ENCODE measurements at regions of chr19 and their contacts with region 1.

Region 1: DNA sequence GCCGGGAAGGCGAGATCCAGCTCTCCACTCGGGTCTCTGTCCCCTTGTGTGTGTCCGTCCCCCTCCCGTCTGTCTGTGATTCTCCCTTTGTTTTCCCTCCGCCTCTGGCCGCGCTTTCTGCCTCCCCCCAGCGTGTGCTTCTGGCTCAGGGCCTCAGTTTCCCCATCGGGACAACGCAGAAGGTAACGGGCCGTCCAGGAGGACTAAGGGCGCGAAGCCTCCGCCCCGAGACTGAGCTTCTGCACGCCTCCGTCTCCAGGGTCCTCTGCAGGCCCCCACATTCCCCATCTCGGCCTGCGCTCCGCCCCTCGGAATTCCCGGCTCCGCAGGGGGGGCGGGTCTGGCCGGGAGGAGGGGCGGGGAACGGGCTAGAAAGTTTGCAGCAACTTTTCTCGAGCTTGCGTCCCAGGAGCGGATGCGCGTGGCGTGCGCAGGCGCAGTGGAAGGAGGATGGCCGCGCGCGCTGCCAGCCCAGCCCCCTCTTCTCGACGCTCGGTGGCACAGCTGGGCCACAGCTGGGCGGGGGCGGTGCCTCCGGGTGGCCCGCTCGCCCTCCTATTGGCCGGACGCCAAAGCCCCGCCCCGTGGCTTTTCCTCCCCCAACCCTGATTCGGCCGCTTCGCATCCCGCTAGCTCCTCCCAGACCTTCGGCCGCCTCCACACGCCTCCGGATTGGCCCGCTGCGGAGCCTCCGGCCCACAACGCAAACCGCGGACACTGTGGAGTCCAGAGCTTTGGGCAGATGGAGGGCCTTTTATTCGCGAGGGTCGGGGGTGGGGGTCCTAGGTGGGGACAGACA is at the start of gene SIX5:
- DNase-seq: peak; percentile 99
- H3K4me3 ChIP-seq: peak within 1 kb of the TSS; percentile 87 to 98 (median 92)
- H3K27ac ChIP-seq: peak within 1 kb of the TSS; percentile 91 to 98 (median 97)
- H3K4me1 ChIP-seq: peaks cover 42 to 75% (median 65%) of the 10 kb centered on the region in 4 donors
- H3K27me3 ChIP-seq: no peaks in the 10 kb centered on the region
- CTCF ChIP-seq: peak in 1 of 3 experiments; percentile 6
- EP300 ChIP-seq: no peak
- POLR2A ChIP-seq: peak; percentile 84
- total RNA-seq, gene SIX5: 18.2 to 39.9 (median 28.8) TPM

Region 2: DNA sequence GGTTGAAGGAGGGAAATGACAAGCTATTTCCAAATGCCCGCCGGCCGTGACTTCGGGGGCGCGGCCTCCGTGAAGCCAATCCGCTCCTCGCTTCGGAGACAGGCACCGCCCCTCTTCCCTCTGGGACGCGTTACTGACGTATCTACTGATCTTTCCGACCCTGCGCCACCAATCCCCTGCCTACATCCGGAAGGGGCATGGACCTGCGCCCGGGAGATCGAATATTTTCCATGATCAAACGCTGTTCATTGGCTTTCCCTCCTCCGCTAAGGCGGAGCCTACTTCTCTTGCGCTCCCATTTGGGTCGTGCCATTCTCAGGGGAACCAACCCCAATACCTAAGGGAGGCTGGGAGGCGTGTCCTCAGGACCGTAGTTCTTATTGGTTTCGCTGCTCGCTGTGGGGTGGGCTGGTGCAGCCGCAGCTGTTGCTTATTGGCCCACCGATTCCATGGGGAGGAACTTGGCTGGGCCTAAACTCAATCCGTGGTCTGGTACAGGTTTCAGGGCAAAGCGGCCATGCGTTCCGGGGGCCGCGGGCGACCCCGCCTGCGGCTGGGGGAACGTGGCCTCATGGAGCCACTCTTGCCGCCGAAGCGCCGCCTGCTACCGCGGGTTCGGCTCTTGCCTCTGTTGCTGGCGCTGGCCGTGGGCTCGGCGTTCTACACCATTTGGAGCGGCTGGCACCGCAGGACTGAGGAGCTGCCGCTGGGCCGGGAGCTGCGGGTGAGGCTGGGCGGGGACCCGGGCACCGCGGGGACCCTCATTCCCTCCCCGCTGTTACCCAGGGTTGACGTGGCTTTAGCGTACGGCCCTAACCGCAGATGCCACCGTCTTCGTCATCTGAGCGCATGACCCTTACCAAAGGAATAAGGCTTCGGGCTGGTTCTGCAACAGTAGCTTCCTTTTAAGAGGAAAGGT is 76.7 kb before region 1 on chr19 and contains the start of gene QPCTL:
- intact Hi-C with region 1: loop called (anchors 2 kb)
- DNase-seq: peak; percentile 99
- H3K4me3 ChIP-seq: peak within 1 kb of the TSS; percentile 65 to 78 (median 73)
- H3K27ac ChIP-seq: peak within 1 kb of the TSS; percentile 86 to 96 (median 92)
- H3K4me1 ChIP-seq: peaks cover 7 to 26% (median 20%) of the 10 kb centered on the region in 4 donors
- H3K27me3 ChIP-seq: no peaks in the 10 kb centered on the region
- CTCF ChIP-seq: no peak
- EP300 ChIP-seq: no peak
- POLR2A ChIP-seq: peak; percentile 6
- total RNA-seq, gene QPCTL: 4.6 to 6.8 (median 6.0) TPM

Region 3: GRCh38 chr19:45717983-45718650 is 51.1 kb before region 1 on chr19:
- intact Hi-C with region 1: loop called (anchors 2 kb)
- DNase-seq: no peak
- H3K4me3 ChIP-seq: peak overlapping the region; percentile 55 to 81 (median 70)
- H3K27ac ChIP-seq: peak overlapping the region; percentile 89 to 95 (median 92)
- H3K4me1 ChIP-seq: peaks cover 10 to 32% (median 24%) of the 10 kb centered on the region in 4 donors
- H3K27me3 ChIP-seq: no peaks in the 10 kb centered on the region
- CTCF ChIP-seq: no peak
- EP300 ChIP-seq: no peak
- POLR2A ChIP-seq: no peak

Region 4: DNA sequence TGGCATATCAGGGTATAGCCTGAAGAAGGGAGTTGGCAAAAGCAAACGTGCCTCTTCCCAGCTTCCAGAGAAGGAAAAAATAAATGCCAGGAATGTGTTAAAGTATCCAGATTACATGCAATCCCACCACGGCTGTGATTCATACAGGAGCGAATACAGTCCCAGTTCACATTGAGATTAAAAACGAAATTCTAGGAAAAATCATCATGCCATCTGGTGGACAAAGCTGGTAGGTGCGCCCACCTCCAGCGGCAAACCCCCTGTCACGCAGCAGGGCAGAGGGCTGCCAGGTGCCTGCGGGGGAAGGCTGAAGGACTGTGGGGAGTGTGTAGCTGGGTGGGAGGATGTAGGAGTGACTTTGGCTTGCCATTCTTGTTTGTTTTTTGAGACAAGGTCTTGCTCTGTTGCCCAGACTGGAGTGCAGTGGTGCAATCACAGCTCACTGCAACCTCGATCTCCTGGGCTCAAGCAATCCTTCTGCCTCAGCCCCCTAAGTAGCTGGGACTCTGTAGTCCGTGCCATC is 29.9 kb after region 1 on chr19:
- intact Hi-C with region 1: loop called (anchors 1 kb)
- DNase-seq: no peak
- H3K4me3 ChIP-seq: no peak overlapping the region
- H3K27ac ChIP-seq: peak overlapping the region in 1 of 4 donors; percentile 34
- H3K4me1 ChIP-seq: peaks cover 6 to 12% (median 10%) of the 10 kb centered on the region in 4 donors
- H3K27me3 ChIP-seq: no peaks in the 10 kb centered on the region
- CTCF ChIP-seq: peak; percentile 91 to 96 (median 95)
- EP300 ChIP-seq: no peak
- POLR2A ChIP-seq: no peak